Caco-2 (cell line): ENCODE measurements at regions of chr6 and their contacts with region 1.

Region 1: DNA sequence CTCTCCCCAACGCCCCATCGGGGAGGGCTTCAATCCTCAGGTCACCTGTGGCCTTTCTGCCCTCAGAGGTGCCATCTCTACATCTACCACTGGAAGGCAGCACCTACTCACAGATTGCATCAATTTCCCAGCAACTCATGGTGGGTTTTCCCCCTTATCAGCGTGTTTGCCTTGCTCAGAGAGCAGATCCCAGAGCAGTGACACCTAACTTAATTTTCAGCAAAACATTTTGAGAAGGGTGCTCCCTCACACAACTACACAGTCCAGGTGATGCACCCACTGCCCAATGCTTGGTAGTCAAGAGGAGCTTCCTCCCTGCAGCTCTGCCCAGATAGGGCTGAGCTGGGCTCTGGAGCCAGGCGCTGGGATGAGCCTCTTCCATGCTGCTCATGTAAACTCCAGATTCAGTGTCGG is 48.2 kb downstream of the PLG start:
- DNase-seq: peak in 1 of 2 experiments; percentile 31
- H3K4me3 ChIP-seq: no peak overlapping the region
- H3K4me3 Mint-ChIP-seq: no peak overlapping the region
- H3K27ac Mint-ChIP-seq: no peak overlapping the region
- H3K4me1 ChIP-seq: no peaks in the 10 kb centered on the region
- H3K4me1 Mint-ChIP-seq: no peaks in the 10 kb centered on the region
- H3K27me3 ChIP-seq: no peaks in the 10 kb centered on the region; the same call in 1 of the 2 replicates
- H3K27me3 Mint-ChIP-seq: peaks cover 12% of the 10 kb centered on the region
- CTCF ChIP-seq: peak; percentile 48 to 73

Region 2: DNA sequence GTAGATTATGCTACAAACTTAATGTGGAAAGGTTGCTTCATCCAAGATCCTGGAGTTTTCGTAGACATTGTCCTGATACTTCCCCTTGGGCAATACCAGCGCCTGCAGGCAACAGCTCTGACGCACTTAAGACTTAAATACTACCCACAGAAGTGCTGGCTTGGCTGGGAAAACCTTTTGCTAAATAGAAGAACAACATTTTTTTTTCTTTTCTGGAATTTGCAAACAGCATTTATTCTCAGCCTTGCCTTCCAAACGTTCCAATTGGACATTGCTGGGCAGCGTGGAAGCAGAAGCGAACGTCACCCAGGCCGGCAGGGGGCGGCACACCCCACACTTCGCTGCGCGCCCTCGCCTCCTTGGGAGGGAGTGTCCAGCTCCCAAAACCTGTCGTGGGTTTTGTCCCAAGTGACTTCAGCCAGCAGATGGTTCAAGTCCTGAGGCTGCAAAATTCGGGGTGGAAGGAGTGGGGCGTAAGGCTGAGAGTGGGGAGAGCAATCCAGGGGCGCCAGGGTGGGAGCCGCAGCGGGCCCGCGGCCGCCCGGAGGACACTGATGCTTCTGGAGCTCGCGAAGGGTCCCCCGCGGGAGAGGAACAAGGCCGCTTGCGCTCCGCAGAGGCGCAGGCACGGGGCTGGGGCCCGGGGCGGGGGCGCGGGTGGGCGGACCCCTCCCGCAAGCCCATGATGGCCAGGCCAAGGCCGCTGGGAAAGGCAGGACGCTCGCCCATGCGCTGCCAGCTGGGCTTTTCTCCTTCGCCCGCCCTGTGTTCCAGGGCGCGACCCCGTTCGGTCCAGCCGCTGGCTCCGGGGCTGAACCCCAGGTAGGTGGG is 180.5 kb after region 1 on chr6:
- CTCF ChIA-PET with region 1: no interaction called
- POLR2A ChIA-PET with region 1: no interaction called
- intact Hi-C with region 1: loop called (anchors 5 kb)
- DNase-seq: no peak
- H3K4me3 ChIP-seq: no peak overlapping the region
- H3K4me3 Mint-ChIP-seq: no peak overlapping the region
- H3K27ac Mint-ChIP-seq: no peak overlapping the region
- H3K4me1 ChIP-seq: no peaks in the 10 kb centered on the region
- H3K4me1 Mint-ChIP-seq: no peaks in the 10 kb centered on the region
- H3K27me3 ChIP-seq: no peaks in the 10 kb centered on the region
- H3K27me3 Mint-ChIP-seq: peaks cover 3% of the 10 kb centered on the region
- CTCF ChIP-seq: no peak

Region 3: DNA sequence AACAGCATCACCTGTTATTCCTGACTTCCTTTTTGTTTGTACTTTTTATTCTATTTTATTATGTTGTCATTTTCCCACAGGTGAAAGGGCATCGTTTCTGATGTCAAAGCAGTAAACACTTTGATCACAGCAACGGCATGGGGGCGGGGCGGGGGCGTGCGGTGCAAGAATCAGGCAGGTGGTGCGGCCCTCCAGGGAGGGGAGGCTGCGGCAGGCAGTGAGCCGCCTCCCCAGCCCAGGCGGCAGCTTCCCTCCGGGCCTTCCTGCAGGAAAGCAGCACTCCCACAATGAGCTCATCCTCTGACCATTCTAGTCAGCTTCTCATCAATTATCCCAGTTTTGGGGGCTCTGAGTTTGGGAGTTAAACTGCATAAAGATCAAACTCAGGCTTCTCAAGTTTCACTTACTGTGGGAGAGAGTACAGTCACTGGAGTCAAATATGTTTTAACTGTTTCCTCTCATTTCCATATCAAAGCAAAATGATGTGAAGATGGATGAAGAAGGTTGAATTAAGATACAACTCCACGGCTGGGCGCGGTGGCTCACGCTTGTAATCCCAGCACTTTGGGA is 1132.0 kb after region 1 on chr6:
- CTCF ChIA-PET with region 1: no interaction called
- POLR2A ChIA-PET with region 1: no interaction called
- intact Hi-C with region 1: no loop called
- DNase-seq: no peak
- H3K4me3 ChIP-seq: no peak overlapping the region
- H3K4me3 Mint-ChIP-seq: no peak overlapping the region
- H3K27ac Mint-ChIP-seq: no peak overlapping the region
- H3K4me1 ChIP-seq: no peaks in the 10 kb centered on the region
- H3K4me1 Mint-ChIP-seq: no peaks in the 10 kb centered on the region
- H3K27me3 ChIP-seq: no peaks in the 10 kb centered on the region
- H3K27me3 Mint-ChIP-seq: no peaks in the 10 kb centered on the region
- CTCF ChIP-seq: no peak